HEK293T (cell line): ENCODE measurements at regions of chr22 and their contacts with region 1.

Region 1: DNA sequence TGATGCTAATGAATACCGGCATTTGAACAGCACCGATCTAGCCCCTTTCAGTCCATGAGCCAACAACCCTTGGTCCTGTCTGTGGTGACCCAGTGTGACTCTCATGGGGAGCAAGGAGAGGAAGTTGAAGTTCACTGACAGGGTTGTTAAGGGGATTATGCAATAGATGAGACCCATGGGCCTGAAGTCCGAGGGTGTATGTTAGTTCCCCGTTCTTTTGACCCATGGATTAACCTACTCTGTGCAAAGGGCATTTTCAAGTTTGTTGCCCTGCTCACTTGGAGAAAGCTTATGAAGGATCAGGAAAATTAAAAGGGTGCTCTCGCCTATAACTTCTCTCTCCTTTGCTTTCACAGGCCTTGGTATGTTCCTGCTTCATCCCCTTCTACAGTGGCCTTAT is 4.9 kb downstream of the PNPLA3 start:
- DNase-seq: no peak

Region 2: GRCh38 chr22:43783777-43784176 is 144.7 kb before region 1 on chr22:
- CTCF ChIA-PET with region 1: no interaction called
- POLR2A ChIA-PET with region 1: no interaction called
- DNase-seq: no peak

Region 3: DNA sequence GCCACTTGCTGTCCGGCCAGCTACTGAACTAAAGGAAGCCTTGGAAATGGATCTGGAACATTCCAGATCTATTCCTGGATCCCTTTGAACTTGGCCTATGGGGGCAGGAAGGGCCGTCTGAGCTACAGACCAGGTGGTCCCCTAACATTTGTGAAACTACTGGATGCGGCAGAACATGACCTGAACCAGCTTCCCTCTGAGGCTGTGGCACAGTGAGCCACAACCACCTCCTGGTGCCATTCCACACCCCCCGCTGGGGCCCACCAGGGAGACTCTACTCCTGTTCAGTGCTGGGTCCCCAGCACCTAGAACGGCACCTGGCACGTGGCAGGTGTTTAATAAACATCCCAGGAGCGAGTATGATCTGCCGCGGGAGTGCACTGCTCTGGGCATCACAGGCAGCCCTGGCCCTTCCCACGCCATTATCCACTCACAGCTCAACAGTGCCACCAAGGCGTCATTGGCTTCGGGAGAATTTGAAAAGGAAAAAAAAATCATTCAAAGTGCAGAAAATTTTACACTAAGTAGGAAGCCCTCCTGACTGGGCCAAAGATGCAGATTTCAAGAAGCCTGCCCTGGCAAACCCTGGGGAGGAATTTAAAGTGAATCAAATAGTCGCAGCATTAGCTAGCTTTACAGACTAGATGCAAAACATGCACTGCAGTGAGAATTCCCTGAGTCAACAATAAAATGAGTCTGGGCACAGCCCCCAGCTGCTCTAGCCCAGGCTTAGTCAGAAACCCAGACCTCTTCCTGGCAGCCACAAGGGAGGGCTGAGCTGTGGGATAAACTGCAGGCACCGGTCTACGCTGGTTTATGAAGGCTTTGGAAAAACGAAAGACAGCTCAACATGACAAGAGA is 102.1 kb before region 1 on chr22:
- CTCF ChIA-PET with region 1: no interaction called
- POLR2A ChIA-PET with region 1: no interaction called
- DNase-seq: no peak

Region 4: GRCh38 chr22:43945632-43946383 is 17.3 kb after region 1 on chr22:
- CTCF ChIA-PET with region 1: interaction called, 10 read pairs
- POLR2A ChIA-PET with region 1: interaction called, 6 read pairs
- DNase-seq: peak; percentile 83

Region 5: DNA sequence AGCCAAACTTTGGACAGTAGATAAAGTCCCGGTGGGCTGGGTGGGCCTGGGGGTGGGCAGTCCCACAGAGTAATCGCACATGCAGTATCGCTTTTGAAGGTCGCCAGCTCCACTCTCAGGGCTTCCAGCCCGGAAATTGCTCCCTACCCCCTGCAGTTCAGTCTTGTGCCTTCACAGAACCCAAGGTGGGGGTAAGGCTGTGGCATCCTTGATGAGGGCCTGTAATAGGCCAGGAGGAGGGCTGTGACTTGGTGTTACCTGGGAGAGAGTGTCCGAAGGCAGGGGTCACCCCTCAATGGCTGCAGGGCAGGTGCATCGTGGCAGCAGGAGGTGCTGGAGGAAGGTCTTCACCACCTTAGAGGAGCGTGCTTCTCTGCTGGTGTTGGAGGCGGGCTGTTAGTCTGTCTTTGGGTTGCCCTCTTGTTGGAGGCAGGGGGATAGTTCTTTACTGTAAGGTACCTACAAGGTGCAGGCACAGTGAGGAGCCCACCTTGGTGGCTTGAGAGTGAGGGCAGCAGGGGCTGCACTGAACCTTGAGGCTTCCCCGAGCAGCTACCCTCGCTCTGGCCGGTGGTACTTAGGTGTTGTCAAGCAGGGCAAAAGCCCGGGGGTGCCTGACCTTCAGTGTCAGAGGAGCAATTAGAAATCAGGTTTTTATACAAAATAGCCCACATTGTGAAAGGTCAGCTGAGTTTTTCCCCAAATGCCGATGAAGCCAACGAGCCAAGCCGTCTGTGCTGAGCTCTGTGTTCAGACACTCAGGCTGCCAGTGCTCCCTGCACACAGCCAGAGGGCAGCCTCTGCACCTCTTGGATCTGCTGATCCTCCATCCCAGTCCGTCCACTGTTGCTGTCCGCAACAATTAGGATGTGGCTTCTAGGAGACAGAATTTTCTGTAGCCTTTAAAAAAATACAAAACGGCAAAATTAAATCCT is 48.7 kb after region 1 on chr22:
- CTCF ChIA-PET with region 1: no interaction called
- POLR2A ChIA-PET with region 1: no interaction called
- DNase-seq: no peak